Naive thymus-derived CD8-positive, alpha-beta T cell (primary cell): ENCODE measurements at regions of chr4 and their contacts with region 1.

Region 1: DNA sequence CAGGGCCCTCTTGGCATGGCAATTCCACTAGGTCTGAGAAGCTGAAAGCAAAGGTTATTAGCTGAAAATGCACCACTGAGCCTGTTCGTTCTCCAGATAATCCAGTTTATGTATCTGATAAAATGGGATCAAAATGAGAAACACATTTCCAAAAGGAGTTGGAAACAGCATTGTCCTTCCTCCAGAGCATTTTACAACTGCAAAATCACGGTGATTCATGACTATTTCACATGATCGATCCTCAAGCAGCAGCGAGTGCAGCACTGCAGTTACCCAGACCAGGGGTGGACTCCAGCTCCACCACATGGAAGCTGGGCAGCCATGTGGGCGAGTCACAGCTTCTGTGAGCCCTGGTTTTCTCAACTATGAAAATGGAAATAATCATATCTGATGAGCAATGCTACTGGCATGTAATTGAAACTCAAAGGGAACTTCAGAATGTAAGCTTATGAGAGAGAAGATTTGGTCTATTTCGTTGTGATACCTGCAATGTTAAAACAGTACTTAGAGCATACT is 78.7 kb upstream of the MSX1 start:
- DNase-seq: no peak
- ATAC-seq: no peak
- H3K4me3 Mint-ChIP-seq: no peak overlapping the region
- H3K27ac Mint-ChIP-seq: no peak overlapping the region
- H3K4me1 Mint-ChIP-seq: no peaks in the 10 kb centered on the region
- H3K27me3 Mint-ChIP-seq: peaks cover 0 to 3% (median 2%) of the 10 kb centered on the region in 5 donors

Region 2: DNA sequence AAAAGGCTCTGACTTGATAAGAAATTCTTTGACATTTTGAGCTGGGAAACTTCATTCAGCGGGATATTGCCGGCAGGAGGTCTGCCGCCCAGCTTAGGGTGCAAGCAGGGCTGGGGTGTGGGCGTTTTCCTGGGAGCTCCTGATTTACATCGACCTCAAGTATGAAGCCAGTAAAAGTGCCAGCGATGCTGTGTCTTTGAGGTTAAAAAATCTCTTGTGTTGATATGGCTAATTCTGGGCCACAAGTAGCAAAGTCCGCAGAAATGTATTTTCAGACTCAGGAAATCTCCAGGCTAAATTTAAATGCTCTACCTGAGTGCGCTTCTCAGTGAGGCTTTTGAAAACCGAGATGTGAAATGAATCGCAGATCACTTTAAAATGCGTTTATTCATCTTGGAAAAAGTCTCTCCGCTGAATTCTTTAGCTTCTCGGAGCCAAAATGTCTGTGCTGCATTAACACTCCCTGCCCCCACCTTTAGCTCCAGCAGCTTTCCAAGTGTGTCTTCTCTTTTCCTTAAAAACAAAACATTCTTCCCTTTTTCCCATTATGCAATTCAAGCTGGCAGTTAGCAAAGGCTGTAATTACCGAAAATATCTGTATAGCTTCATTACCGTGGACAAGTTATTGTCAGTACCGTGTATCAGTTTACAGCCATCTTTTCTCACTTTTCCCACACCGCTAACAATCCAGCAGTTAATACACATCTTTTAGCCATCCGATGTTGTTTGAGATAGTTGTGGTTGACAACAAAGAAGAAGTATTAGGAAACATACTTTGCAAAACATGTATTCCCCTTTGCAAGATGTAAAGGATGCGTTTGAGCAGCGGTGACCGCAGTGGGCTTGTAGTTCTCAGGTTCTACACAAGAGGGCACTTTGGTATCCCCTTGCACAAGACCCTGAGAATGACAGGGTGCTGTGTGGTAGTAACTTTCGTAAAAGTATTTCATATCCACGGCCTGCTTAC is 102.9 kb before region 1 on chr4:
- POLR2A ChIA-PET with region 1: interaction called, 12 read pairs
- DNase-seq: no peak
- ATAC-seq: no peak
- H3K4me3 Mint-ChIP-seq: no peak overlapping the region
- H3K27ac Mint-ChIP-seq: no peak overlapping the region
- H3K4me1 Mint-ChIP-seq: peaks cover 0 to 1% (median 0%) of the 10 kb centered on the region in 4 donors
- H3K27me3 Mint-ChIP-seq: no peaks in the 10 kb centered on the region

Region 3: DNA sequence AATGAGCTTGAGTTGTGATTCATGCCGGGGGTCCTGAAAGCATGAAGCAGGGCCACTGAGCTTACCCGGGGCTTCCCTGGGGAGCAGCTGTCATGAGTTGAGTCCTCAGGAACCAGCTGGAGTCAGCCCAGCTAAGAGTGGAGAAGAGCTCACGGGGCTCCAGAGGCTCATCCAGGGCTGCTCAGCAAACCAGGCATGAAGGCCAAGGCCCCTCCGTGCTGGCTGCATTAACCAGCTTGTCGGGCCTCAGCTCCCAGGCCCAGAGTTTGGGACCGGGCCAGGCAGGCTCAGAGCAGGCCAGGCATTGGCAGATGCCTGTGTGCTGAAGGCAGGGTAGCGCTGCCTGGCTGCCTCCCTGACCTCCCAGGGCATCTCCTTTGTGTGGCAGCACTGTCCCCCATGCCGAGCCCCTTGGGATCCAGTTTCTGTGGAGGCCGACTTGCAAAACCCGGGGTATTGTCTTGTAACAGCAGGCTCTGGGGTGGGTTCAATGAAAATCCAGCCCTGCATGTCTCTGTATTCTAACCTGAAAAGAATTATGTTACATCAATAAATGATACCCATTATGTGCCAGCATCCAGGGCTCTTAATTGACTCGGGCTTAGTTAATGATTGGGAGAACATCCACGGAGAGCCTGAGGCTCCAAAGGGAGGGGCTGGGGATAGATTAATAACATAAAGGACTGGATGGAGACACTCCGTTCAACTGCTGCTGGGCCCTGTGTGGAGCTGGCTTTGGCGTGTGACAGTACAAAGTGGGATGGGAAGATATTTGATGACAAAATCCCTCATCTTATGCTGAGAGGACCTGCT is 10.7 kb after region 1 on chr4:
- POLR2A ChIA-PET with region 1: no interaction called
- DNase-seq: no peak
- ATAC-seq: no peak
- H3K4me3 Mint-ChIP-seq: no peak overlapping the region
- H3K27ac Mint-ChIP-seq: no peak overlapping the region
- H3K4me1 Mint-ChIP-seq: no peaks in the 10 kb centered on the region
- H3K27me3 Mint-ChIP-seq: peaks cover 4 to 26% (median 15%) of the 10 kb centered on the region in 5 donors